ENCODE measurements at regions of chr19 and their contacts with region 1.

Region 1: GRCh38 chr19:49391581-49392399 is 3.7 kb downstream of the KASH5 start:
- DNase-seq: peak; percentile 86
- ATAC-seq: peak; percentile 59
- H3K4me3 ChIP-seq: no peak overlapping the region
- H3K4me3 Mint-ChIP-seq: peak overlapping the region; percentile 44
- H3K27ac ChIP-seq: peak overlapping the region; percentile 61 to 65
- H3K27ac Mint-ChIP-seq: peak overlapping the region; percentile 79
- H3K4me1 ChIP-seq: peaks cover 21 to 46% of the 10 kb centered on the region in 2 donors
- H3K4me1 Mint-ChIP-seq: peaks cover 41% of the 10 kb centered on the region
- H3K27me3 ChIP-seq: no peaks in the 10 kb centered on the region
- H3K27me3 Mint-ChIP-seq: no peaks in the 10 kb centered on the region
- CTCF ChIP-seq: peak; percentile 87

Region 2: DNA sequence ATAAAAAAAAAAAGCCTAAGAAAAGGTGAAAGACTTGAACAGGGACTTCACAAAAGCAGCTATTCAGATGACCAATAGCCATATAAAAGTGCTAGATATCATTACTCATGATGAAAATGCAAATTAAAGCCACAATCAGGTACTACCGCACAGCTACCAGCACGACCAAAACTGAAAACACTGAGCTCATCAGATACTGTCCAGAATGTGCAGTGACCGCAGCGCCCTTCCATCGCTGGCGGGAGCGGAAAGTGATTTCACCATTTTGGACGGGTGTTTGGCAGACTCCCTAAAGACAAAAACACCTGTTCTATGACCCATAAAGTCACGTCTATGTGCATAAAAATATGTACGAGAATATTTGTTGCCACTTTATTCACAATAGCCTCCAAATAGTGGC is 127.5 kb before region 1 on chr19:
- CTCF ChIA-PET with region 1: interaction called, 12 read pairs
- POLR2A ChIA-PET with region 1: no interaction called
- intact Hi-C with region 1: no loop called
- DNase-seq: no peak
- ATAC-seq: no peak
- H3K4me3 ChIP-seq: no peak overlapping the region
- H3K4me3 Mint-ChIP-seq: no peak overlapping the region
- H3K27ac ChIP-seq: no peak overlapping the region
- H3K27ac Mint-ChIP-seq: no peak overlapping the region
- H3K4me1 ChIP-seq: no peaks in the 10 kb centered on the region
- H3K4me1 Mint-ChIP-seq: peaks cover 3% of the 10 kb centered on the region
- H3K27me3 ChIP-seq: no peaks in the 10 kb centered on the region
- H3K27me3 Mint-ChIP-seq: peaks cover 14% of the 10 kb centered on the region
- CTCF ChIP-seq: no peak

Region 3: GRCh38 chr19:49326165-49326704 is 65.6 kb before region 1 on chr19:
- CTCF ChIA-PET with region 1: interaction called, 11 read pairs
- POLR2A ChIA-PET with region 1: interaction called, 4 read pairs
- intact Hi-C with region 1: no loop called
- DNase-seq: peak; percentile 76
- ATAC-seq: peak; percentile 60
- H3K4me3 ChIP-seq: peak overlapping the region in 2 of 5 experiments; percentile 17 to 50
- H3K4me3 Mint-ChIP-seq: peak overlapping the region; percentile 77
- H3K27ac ChIP-seq: peak overlapping the region; percentile 69 to 93
- H3K27ac Mint-ChIP-seq: peak overlapping the region; percentile 91
- H3K4me1 ChIP-seq: peaks cover 74 to 80% of the 10 kb centered on the region in 2 donors
- H3K4me1 Mint-ChIP-seq: peaks cover 71% of the 10 kb centered on the region
- H3K27me3 ChIP-seq: no peaks in the 10 kb centered on the region
- H3K27me3 Mint-ChIP-seq: no peaks in the 10 kb centered on the region
- CTCF ChIP-seq: no peak

Region 4: DNA sequence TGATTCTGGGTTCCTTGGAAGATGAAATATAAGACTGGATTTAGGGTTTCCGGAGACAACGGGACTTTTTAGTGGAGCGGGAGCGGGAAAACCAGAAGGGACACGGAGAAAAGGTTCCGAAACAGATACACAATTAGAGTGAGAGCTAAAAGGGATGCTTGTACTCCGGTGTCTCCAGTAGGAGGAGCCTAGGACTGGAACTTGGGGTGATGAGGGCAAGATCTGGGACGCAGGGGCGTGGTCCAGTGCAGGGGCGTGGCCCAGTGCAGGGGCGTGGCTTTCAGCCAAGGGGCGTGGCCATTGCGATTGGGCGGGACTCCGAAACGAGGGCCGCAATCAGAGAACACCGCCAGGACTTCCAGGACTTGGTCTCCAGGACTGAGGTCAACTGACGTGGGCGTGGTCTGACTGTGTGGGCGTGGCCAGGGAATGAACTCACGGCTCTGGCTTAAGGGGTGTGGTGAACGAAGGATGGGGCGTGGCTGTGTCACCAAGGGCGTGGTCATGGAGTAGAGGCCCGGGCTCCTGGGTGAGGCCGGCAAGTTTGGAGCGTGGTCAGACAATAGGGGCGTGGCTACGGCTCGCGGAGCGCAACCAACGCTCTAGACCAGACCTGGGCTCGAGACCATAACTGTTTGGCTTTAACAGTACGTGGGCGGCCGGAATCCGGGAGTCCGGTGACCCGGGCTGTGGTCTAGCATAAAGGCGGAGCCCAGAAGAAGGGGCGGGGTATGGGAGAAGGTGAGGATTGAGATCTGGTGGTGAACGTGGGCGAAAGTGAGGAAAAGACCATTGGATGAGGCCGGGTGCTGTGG is 28.3 kb before region 1 on chr19 and contains the start of gene DKKL1:
- CTCF ChIA-PET with region 1: interaction called, 8 read pairs
- POLR2A ChIA-PET with region 1: interaction called, 6 read pairs
- intact Hi-C with region 1: loop called (anchors 1 kb)
- DNase-seq: peak; percentile 88
- ATAC-seq: peak; percentile 80
- H3K4me3 ChIP-seq: peak within 1 kb of the TSS in 4 of 5 experiments; percentile 45 to 83 (median 58)
- H3K4me3 Mint-ChIP-seq: peak within 1 kb of the TSS; percentile 35
- H3K27ac ChIP-seq: peak within 1 kb of the TSS in 1 of 2 donors; percentile 6
- H3K27ac Mint-ChIP-seq: no peak within 1 kb of the TSS
- H3K4me1 ChIP-seq: peaks cover 46 to 55% of the 10 kb centered on the region in 2 donors
- H3K4me1 Mint-ChIP-seq: peaks cover 37% of the 10 kb centered on the region
- H3K27me3 ChIP-seq: peaks cover 0 to 10% (median 3%) of the 10 kb centered on the region in 4 experiments
- H3K27me3 Mint-ChIP-seq: no peaks in the 10 kb centered on the region
- CTCF ChIP-seq: no peak
- total RNA-seq, gene DKKL1: 0.68 and 1.2 TPM in 2 replicates

Region 5: DNA sequence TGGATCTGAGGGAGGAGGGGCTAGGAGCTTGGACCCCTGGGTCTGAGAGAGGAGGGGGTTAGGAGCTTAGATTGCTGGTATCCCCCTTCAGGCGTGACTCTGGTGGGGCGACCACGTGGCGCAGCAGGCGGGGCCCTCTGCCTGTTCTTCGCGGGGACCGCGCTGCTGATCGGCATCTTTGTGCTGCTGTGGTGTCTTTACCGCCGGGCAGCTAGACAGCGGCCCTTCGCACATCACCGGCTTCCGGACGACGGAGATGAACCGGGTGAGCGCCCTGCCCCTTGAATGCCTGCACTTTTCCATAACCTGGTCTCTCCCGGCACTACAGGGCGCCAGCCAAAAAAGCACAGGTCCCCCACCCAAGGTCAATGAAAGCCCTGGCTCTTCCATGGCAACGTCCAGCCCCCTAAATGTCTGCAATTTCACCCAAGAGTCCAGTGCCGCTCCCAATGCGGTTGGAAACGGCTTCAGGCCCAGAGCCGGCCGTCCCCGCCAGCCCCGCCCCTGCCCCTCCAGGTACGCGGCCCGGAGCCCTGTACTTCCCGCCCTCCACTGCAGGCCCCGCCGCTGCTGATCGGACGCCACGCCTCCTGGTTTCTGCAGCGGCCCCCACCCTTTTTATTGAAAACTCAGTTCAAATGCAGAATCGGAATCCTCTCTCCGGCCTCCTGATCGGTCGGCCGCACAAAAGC is 36.2 kb after region 1 on chr19:
- CTCF ChIA-PET with region 1: interaction called, 9 read pairs
- POLR2A ChIA-PET with region 1: interaction called, 4 read pairs
- intact Hi-C with region 1: loop called (anchors 5 kb)
- DNase-seq: peak; percentile 57
- ATAC-seq: peak; percentile 47
- H3K4me3 ChIP-seq: peak overlapping the region in 4 of 5 experiments; percentile 11 to 63 (median 34)
- H3K4me3 Mint-ChIP-seq: peak overlapping the region; percentile 82
- H3K27ac ChIP-seq: no peak overlapping the region
- H3K27ac Mint-ChIP-seq: peak overlapping the region; percentile 32
- H3K4me1 ChIP-seq: peaks cover 54 to 63% of the 10 kb centered on the region in 2 donors
- H3K4me1 Mint-ChIP-seq: peaks cover 59% of the 10 kb centered on the region
- H3K27me3 ChIP-seq: peaks cover 0 to 99% (median 71%) of the 10 kb centered on the region in 4 experiments
- H3K27me3 Mint-ChIP-seq: peaks cover 77% of the 10 kb centered on the region
- CTCF ChIP-seq: no peak

Region 6: GRCh38 chr19:49468746-49469447 is 77.1 kb after region 1 on chr19:
- CTCF ChIA-PET with region 1: interaction called, 54 read pairs
- POLR2A ChIA-PET with region 1: interaction called, 18 read pairs
- intact Hi-C with region 1: loop called (anchors 1 kb)
- DNase-seq: peak; percentile 98
- ATAC-seq: peak; percentile 75
- H3K4me3 ChIP-seq: peak overlapping the region in 1 of 5 experiments; percentile 18
- H3K4me3 Mint-ChIP-seq: peak overlapping the region; percentile 74
- H3K27ac ChIP-seq: peak overlapping the region; percentile 96 to 98
- H3K27ac Mint-ChIP-seq: peak overlapping the region; percentile 98
- H3K4me1 ChIP-seq: peaks cover 44 to 57% of the 10 kb centered on the region in 2 donors
- H3K4me1 Mint-ChIP-seq: peaks cover 41% of the 10 kb centered on the region
- H3K27me3 ChIP-seq: no peaks in the 10 kb centered on the region
- H3K27me3 Mint-ChIP-seq: no peaks in the 10 kb centered on the region
- CTCF ChIP-seq: no peak